GM23248 (cell line): ENCODE measurements at regions of chr14 and their contacts with region 1.

Region 1: DNA sequence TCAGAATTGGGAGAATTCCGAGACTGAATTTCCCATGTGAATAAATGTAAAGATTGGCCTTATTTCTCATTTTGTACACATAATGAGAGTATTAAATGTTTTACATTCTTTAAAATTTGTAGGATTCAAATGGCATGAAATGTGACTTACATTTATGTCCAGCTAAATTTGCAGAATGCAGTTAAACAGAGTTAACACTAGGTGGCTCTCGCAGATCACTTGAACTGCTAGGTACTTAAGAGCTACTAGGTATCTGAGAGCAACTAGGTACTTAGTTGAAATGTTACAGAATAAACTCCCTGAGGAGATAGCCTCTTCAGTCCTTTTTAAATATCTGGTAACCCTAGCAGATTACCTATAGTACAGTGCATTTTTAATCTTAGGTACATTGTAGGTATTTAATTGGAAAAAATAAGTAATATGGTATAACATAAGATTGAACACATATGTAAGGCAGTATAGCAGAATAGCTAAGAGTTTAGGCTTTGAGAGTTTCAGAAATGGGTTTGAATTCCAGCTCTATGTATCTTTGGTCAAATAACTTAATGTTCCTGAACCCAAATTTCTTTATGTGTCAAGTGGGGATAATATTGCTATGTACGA is 73.8 kb downstream of the KIAA0586 start:
- DNase-seq: peak; percentile 79
- H3K4me3 ChIP-seq: no peak overlapping the region
- H3K27ac ChIP-seq: no peak overlapping the region
- H3K4me1 ChIP-seq: no peaks in the 10 kb centered on the region
- H3K27me3 ChIP-seq: no peaks in the 10 kb centered on the region

Region 2: GRCh38 chr14:58626431-58626831 is 125.1 kb after region 1 on chr14:
- in situ Hi-C with region 1: loop called (anchors 10 kb)
- DNase-seq: peak; percentile 90
- H3K4me3 ChIP-seq: no peak overlapping the region
- H3K27ac ChIP-seq: no peak overlapping the region
- H3K4me1 ChIP-seq: peaks cover 8% of the 10 kb centered on the region
- H3K27me3 ChIP-seq: peaks cover 12% of the 10 kb centered on the region; the same call in 1 of the 2 replicates